ENCODE measurements at regions of chr12 and their contacts with region 1.

Region 1: GRCh38 chr12:56468216-56469006 is at the start of gene SPRYD4:
- DNase-seq: peak; percentile 94
- H3K4me3 ChIP-seq: peak within 1 kb of the TSS; percentile 89 to 94 (median 92)
- H3K4me3 Mint-ChIP-seq: peak within 1 kb of the TSS; percentile 88 to 96
- H3K27ac ChIP-seq: peak within 1 kb of the TSS; percentile 71 to 93
- H3K27ac Mint-ChIP-seq: peak within 1 kb of the TSS; percentile 89 to 97 (median 94)
- H3K4me1 ChIP-seq: peaks cover 27 to 31% of the 10 kb centered on the region in 2 donors
- H3K4me1 Mint-ChIP-seq: peaks cover 30% of the 10 kb centered on the region
- H3K27me3 ChIP-seq: no peaks in the 10 kb centered on the region
- H3K27me3 Mint-ChIP-seq: peaks cover 0 to 2% (median 0%) of the 10 kb centered on the region in 3 donors
- CTCF ChIP-seq: no peak
- polyA plus RNA-seq, gene SPRYD4: 1.3 to 2.1 (median 1.4) TPM

Region 2: GRCh38 chr12:56333679-56334489 is 134.5 kb before region 1 on chr12 and contains the start of gene PAN2:
- intact Hi-C with region 1: loop called in 1 of 2 experiments (anchors 10 kb)
- DNase-seq: peak; percentile 93 to 97 (median 93)
- H3K4me3 ChIP-seq: peak within 1 kb of the TSS; percentile 50 to 79 (median 64)
- H3K4me3 Mint-ChIP-seq: peak within 1 kb of the TSS; percentile 83 to 94
- H3K27ac ChIP-seq: peak within 1 kb of the TSS; percentile 94 to 99
- H3K27ac Mint-ChIP-seq: peak within 1 kb of the TSS; percentile 99 to 100 (median 100)
- H3K4me1 ChIP-seq: peaks cover 53 to 56% of the 10 kb centered on the region in 2 donors
- H3K4me1 Mint-ChIP-seq: peaks cover 53% of the 10 kb centered on the region
- H3K27me3 ChIP-seq: no peaks in the 10 kb centered on the region
- H3K27me3 Mint-ChIP-seq: peaks cover 0 to 3% (median 2%) of the 10 kb centered on the region in 3 donors
- CTCF ChIP-seq: peak; percentile 74
- polyA plus RNA-seq, gene PAN2: 8.8 to 120 (median 16.0) TPM

Region 3: GRCh38 chr12:57195611-57196371 is 727.4 kb after region 1 on chr12:
- intact Hi-C with region 1: no loop called
- DNase-seq: no peak
- H3K4me3 ChIP-seq: no peak overlapping the region
- H3K4me3 Mint-ChIP-seq: no peak overlapping the region
- H3K27ac ChIP-seq: no peak overlapping the region
- H3K27ac Mint-ChIP-seq: no peak overlapping the region
- H3K4me1 ChIP-seq: no peaks in the 10 kb centered on the region
- H3K4me1 Mint-ChIP-seq: no peaks in the 10 kb centered on the region
- H3K27me3 ChIP-seq: no peaks in the 10 kb centered on the region
- H3K27me3 Mint-ChIP-seq: peaks cover 1 to 20% (median 5%) of the 10 kb centered on the region in 3 donors
- CTCF ChIP-seq: no peak